ENCODE measurements at regions of chr5 and their contacts with region 1.

Region 1: DNA sequence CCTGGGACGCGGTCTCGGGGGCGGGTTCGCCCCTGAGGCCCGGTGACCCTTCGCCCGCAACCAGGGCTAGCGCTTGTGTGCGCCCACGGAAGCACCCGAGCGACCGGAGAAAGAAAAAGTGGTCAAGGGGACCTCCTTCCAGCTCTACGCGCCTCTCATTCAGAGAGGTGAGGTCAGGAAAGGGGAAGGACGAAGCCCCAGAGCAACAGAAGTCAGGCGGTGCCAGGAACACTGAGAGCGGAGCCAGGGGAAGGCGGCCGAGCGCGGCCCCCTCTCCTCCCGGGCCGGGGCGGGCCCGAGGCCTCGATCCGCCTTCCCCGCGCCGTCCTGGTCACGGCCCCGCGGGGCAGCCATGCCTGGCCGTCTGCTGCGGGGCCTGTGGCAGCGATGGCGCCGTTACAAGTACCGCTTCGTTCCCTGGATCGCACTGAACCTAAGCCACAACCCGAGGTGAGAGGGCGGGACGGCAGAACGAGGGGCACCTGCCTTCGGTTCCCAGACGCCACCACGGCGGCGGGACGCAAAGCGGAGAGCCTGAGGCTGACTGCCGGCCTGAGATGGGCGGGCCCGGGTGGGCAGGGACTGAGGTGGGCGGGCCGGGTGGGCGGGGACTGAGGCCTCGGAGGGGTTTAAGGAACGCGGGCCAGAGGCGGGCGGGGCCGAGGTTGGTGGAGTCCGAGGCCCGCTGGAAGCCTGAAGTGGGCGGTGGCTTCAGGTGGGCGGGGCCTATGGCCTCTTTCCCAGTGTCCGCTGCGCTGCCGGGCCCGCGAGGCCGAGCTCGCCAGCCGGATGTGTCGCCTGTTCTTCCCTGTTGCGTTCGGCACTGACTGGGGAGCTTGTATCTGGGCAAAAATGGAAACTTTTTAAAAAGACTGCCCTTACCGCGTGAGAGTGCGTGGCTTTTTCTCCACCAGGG is at the start of gene SETD9:
- DNase-seq: peak; percentile 99
- ATAC-seq: peak; percentile 92
- H3K4me3 Mint-ChIP-seq: peak within 1 kb of the TSS; percentile 89
- H3K27ac Mint-ChIP-seq: peak within 1 kb of the TSS; percentile 98
- H3K4me1 Mint-ChIP-seq: peaks cover 28% of the 10 kb centered on the region
- H3K27me3 Mint-ChIP-seq: no peaks in the 10 kb centered on the region; the same call in 1 of the 2 replicates
- CTCF ChIP-seq: no peak
- total RNA-seq, gene SETD9: 6.7 to 9.5 TPM (median 8.1 TPM) in 3 replicates

Region 2: DNA sequence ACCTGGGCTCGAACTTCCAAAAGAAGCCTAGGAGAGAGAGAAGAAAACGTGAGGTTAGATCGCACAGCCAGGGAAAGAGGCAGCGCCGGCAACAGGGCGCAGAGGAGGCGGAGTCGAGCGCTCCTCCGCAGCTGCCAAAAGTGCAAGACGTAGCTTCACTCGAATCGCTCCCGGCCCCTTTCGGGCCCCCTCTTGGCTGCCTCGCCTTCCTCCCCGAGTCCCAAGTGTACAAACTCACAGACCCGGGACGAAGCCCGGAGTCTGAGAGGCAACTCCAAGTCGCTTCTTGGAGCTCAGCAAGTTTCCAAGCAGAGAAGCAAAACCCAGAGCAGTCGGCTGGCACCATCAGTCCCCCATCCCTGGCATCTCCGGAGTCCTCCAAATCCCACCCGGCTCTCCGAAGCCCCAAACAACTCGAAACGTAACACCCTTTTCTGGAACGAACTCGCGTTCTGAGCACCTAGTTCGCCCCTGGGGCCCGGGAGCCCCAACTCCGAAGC is 41.1 kb after region 1 on chr5:
- CTCF ChIA-PET with region 1: no interaction called
- POLR2A ChIA-PET with region 1: interaction called, 29 read pairs
- DNase-seq: peak; percentile 53
- ATAC-seq: peak; percentile 60
- H3K4me3 Mint-ChIP-seq: peak overlapping the region; percentile 95
- H3K27ac Mint-ChIP-seq: peak overlapping the region; percentile 80
- H3K4me1 Mint-ChIP-seq: peaks cover 18% of the 10 kb centered on the region
- H3K27me3 Mint-ChIP-seq: peaks cover 20% of the 10 kb centered on the region
- CTCF ChIP-seq: no peak

Region 3: DNA sequence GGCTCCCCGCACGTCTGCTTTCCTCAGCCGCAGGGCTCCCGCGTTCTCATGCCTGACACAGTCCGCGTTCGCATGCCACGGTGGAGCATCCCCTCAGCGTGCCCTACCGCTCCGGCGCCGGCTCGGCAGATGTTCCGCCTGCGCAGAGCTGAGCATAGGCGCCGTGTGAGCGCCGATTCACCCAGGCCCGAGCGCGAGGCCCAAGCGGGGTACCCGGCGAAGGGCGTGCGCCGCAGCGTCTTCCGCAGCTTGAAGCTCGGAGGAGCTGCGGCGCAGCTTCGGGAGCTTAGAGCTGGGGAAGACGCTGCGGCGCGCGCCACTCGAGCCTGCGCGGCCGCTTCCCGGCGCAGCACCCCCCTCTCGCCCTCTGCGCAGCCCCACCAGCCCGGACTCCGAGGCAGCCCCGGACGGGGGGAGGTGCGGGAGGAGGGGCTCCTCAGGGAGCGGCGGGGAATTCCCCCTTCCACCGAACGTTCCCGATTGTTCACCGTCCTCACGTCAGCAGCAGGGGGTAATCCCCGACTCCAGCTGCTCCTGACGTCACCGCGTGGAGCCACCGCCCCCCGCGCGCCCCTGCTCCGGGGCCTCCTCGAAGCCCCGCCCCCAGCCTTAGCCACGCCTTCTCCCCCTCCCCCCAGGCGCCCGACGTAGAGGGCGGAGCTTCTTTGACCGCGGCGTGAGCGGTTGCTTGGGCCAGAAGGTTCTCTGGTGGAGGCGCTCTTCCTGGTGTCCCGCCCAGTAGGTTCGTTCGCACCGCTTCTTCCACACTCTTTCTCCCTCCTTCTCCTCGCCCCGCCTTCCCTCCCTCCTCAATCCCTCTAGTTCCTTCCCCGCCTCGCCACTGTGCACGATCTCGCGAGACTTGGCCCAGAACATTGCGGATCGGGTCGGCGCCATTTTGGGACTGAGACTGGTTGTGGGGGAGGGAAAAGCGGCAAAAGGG is 263.9 kb after region 1 on chr5 and contains the start of gene GPBP1:
- CTCF ChIA-PET with region 1: no interaction called
- POLR2A ChIA-PET with region 1: interaction called, 18 read pairs
- DNase-seq: peak; percentile 96
- ATAC-seq: peak; percentile 88
- H3K4me3 Mint-ChIP-seq: peak within 1 kb of the TSS; percentile 97
- H3K27ac Mint-ChIP-seq: peak within 1 kb of the TSS; percentile 100
- H3K4me1 Mint-ChIP-seq: peaks cover 30% of the 10 kb centered on the region
- H3K27me3 Mint-ChIP-seq: peaks cover 6% of the 10 kb centered on the region
- CTCF ChIP-seq: no peak
- total RNA-seq, gene GPBP1: 100 to 106 TPM (median 104 TPM) in 3 replicates